ENCODE measurements at regions of chr20 and their contacts with region 1.

Region 1: GRCh38 chr20:51306503-51307358 is 235.8 kb downstream of the NFATC2 start:
- DNase-seq: peak; percentile 34
- H3K4me3 ChIP-seq: no peak overlapping the region
- H3K27ac ChIP-seq: no peak overlapping the region
- H3K27me3 ChIP-seq: no peaks in the 10 kb centered on the region
- CTCF ChIP-seq: peak; percentile 87

Region 2: GRCh38 chr20:50992733-50993457 is 313.8 kb before region 1 on chr20:
- CTCF ChIA-PET with region 1: interaction called, 295 read pairs
- POLR2A ChIA-PET with region 1: interaction called, 6 read pairs
- DNase-seq: no peak
- H3K4me3 ChIP-seq: no peak overlapping the region
- H3K27ac ChIP-seq: no peak overlapping the region
- H3K27me3 ChIP-seq: no peaks in the 10 kb centered on the region
- CTCF ChIP-seq: peak; percentile 75

Region 3: DNA sequence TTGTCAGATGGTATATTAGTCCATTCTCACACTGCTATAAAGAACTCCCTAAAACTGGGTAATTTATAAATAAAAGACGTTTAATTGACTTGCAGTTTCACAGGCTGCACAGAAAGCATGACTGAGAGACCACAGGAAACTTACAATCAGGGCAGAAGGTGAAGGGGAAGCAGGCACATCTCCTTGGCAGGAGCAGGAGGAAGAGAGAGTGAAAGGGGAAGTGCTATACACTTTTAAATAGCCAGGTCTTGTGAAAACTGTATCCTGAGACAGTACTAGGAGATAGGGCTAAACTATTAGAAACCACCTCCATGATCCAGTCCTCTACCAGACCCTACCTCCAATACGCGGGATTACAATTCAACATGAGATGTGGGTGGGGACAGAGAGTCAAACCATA is 89.9 kb before region 1 on chr20:
- CTCF ChIA-PET with region 1: no interaction called
- POLR2A ChIA-PET with region 1: no interaction called
- DNase-seq: no peak
- H3K4me3 ChIP-seq: no peak overlapping the region
- H3K27ac ChIP-seq: no peak overlapping the region
- H3K27me3 ChIP-seq: peaks cover 9% of the 10 kb centered on the region
- CTCF ChIP-seq: no peak

Region 4: DNA sequence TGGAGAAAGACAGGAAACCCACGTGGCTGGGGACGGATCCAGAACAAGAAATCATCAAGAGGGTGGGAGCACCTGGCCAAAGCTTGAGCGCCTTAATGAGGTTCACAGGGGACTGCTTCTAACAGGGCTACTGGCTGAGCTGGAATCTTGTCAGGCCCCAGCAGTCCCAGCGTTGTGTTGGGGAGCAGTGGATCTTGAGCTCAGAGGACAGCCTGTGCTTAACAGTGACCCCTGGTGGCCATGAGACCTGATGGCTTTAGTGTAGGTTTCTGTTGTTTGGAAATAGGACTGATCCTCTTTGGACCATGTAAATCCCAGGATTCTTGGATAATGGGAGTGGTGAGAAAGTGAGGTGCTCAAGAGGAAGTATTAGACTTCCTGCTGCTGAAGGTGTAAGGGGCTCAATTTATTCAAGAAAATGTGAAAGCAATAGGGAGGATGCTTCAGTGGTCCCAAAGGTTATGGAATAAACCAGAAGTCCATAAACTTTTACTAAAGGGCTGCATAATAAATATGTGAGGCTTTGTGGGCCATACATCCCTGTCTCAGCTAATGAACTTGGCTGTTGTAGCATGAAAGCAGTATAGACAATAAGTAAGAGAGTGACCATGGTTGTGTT is 19.6 kb after region 1 on chr20:
- CTCF ChIA-PET with region 1: interaction called, 12 read pairs
- POLR2A ChIA-PET with region 1: no interaction called
- DNase-seq: no peak
- H3K4me3 ChIP-seq: no peak overlapping the region
- H3K27ac ChIP-seq: peak overlapping the region; percentile 93
- H3K27me3 ChIP-seq: no peaks in the 10 kb centered on the region
- CTCF ChIP-seq: peak; percentile 44